ENCODE measurements at regions of chr19 and their contacts with region 1.

Region 1: DNA sequence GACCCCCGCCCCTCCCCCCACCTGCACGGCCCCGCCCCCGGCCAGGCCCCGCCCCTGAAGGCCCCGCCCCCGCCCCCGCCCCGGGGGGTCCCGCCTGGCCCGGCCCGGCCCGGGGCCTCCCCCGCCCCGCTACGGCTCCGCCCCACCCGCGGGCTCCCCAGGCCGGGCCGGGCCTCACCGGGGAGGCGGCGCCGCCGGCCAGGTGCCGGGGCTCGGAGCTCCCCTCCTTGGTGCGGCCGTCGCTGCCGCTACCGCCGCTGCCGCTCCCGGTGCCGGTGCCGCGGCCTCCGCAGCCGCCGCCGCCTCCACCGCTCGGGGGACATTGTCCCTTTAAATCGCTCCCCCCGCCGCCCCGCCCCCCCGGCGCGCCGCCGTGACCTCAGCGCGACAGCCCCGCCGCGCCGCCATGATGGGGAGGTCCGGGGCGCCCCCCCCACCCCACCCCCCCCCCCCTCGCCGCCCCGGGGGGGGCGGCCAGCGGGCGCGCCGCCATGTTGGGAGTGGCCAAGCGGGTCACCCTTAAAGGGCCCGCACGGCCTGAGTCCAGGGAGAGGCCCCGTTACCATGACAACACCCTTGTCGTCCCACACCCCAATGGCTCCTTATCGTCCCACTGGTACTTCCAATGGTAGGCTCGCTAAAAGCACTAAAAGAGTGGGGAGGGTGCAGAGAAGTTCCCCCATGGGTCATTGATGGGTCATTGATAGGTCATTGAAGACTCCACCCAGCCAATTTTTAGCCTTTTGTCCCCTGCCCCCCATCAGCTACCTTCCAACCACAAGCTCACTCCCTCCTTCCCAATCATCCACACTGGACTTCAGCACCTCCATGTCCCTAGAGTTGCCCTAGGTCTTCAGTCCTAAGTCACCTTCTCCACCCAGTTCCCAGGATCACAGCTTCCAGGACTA is at the start of gene WIZ:
- DNase-seq: peak; percentile 89
- ATAC-seq: peak; percentile 74
- H3K4me3 Mint-ChIP-seq: peak within 1 kb of the TSS; percentile 80
- H3K27ac Mint-ChIP-seq: peak within 1 kb of the TSS; percentile 90
- H3K4me1 Mint-ChIP-seq: peaks cover 17% of the 10 kb centered on the region
- H3K27me3 Mint-ChIP-seq: no peaks in the 10 kb centered on the region
- CTCF ChIP-seq: no peak
- total RNA-seq, gene WIZ: 32.6 and 34.1 TPM in 2 replicates

Region 2: GRCh38 chr19:15432629-15433518 is 17.0 kb before region 1 on chr19:
- CTCF ChIA-PET with region 1: no interaction called
- POLR2A ChIA-PET with region 1: interaction called, 10 read pairs
- intact Hi-C with region 1: loop called (anchors 1 kb)
- DNase-seq: peak; percentile 92
- ATAC-seq: peak; percentile 89
- H3K4me3 Mint-ChIP-seq: peak overlapping the region; percentile 97
- H3K27ac Mint-ChIP-seq: peak overlapping the region; percentile 93
- H3K4me1 Mint-ChIP-seq: peaks cover 31% of the 10 kb centered on the region
- H3K27me3 Mint-ChIP-seq: no peaks in the 10 kb centered on the region
- CTCF ChIP-seq: no peak

Region 3: DNA sequence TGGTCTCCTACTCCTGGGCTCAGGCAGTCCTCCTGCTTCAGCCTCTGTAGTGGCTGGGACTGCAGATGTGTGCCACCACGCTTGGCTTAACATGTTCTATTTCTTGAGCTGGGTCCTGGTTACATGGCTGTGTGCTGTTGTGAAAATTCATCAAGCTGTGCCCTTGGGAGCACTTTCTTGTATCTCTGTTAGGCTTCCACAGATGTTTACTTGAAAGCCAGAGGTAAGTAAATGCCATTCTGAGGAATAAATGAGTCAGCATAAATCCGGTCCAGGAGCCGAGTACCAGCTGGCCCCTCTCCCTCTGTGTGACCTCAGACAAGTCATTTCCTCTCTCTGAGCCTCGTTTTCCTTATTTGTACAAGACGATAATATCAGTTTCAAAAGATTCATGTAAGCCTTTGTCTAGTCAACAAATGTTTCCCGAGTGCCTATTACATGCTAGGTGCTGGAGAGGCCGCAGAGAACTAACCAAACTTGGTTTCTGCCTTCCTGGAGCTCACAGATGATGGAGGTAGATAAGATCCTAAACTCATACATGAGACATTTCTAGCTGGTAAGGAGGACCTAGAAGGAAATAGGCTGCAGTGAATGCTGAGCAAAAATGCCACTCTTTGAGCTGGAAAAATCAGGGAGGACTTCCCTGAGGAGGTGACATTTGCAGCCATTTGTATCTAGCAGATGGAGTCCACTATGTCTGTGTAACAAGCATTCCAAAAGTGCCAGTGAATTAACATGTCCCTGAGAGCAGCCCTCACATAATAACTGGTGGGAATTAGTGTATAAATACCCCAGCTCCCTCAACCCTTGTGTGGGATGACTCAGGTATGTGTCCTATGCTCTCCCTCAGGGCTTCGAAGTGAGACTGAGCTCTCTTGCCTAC is 17.2 kb after region 1 on chr19:
- CTCF ChIA-PET with region 1: interaction called, 4 read pairs
- POLR2A ChIA-PET with region 1: interaction called, 7 read pairs
- intact Hi-C with region 1: loop called (anchors 2 kb)
- DNase-seq: no peak
- ATAC-seq: no peak
- H3K4me3 Mint-ChIP-seq: peak overlapping the region; percentile 50
- H3K27ac Mint-ChIP-seq: peak overlapping the region; percentile 12
- H3K4me1 Mint-ChIP-seq: peaks cover 50% of the 10 kb centered on the region
- H3K27me3 Mint-ChIP-seq: peaks cover 15% of the 10 kb centered on the region
- CTCF ChIP-seq: no peak

Region 4: DNA sequence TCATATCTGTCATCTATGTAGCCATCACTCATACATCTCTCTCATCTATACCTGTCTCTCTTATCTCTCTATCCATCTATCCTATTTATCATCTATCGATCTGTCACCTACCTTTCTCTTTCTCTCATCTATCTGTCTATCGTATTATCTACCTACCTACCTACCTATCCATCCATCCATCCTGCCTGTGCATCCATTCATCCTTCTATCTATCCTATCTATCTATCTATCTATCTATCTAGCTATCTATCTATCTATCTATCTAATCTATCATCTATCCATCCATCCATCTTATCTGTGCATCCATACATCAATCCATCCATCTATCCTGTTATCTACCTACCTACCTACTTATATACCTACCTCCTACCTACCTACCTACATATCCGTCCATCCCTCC is 120.5 kb after region 1 on chr19:
- CTCF ChIA-PET with region 1: no interaction called
- POLR2A ChIA-PET with region 1: no interaction called
- intact Hi-C with region 1: no loop called
- DNase-seq: no peak
- ATAC-seq: no peak
- H3K4me3 Mint-ChIP-seq: no peak overlapping the region
- H3K27ac Mint-ChIP-seq: no peak overlapping the region
- H3K4me1 Mint-ChIP-seq: no peaks in the 10 kb centered on the region
- H3K27me3 Mint-ChIP-seq: peaks cover 42% of the 10 kb centered on the region
- CTCF ChIP-seq: no peak